ENCODE measurements at regions of chr3 and their contacts with region 1.

Region 1: GRCh38 chr3:138834359-138835212 is at the start of gene PIK3CB:
- DNase-seq: peak; percentile 78 to 94 (median 88)
- ATAC-seq: peak; percentile 86
- H3K4me3 ChIP-seq: peak within 1 kb of the TSS; percentile 92
- H3K4me3 Mint-ChIP-seq: peak within 1 kb of the TSS; percentile 94
- H3K27ac ChIP-seq: peak within 1 kb of the TSS; percentile 68 to 81
- H3K27ac Mint-ChIP-seq: peak within 1 kb of the TSS; percentile 96
- H3K4me1 ChIP-seq: peaks cover 36% of the 10 kb centered on the region
- H3K4me1 Mint-ChIP-seq: peaks cover 31% of the 10 kb centered on the region
- H3K27me3 ChIP-seq: no peaks in the 10 kb centered on the region
- H3K27me3 Mint-ChIP-seq: no peaks in the 10 kb centered on the region
- CTCF ChIP-seq: peak; percentile 39
- total RNA-seq, gene PIK3CB: 23.0 to 26.4 TPM

Region 2: DNA sequence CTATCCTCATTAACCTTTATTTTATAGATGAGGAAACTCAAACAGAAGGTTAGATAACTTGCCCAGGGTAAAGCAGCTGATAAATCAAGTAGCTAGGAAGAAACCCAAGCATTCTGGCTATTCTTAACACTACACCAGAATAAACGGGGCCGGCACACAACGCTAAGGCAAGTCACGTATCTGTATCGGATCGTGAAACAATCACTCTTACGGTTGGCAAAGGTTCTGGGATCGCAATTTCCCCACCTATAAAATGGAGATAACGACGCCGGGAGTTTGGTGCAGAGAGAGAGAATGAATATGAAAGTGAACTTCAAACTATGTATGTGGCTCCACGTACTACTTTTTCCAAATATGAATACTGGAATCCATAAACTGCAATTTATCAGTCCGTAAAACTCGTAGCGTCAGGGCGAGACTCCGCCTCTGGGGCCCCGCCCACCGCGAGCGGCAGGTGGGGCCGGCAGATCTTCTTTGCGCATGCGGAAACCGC is 647.7 kb before region 1 on chr3:
- CTCF ChIA-PET with region 1: no interaction called
- POLR2A ChIA-PET with region 1: no interaction called
- intact Hi-C with region 1: loop called in 1 of 2 experiments (anchors 10 kb)
- DNase-seq: peak; percentile 78 to 95 (median 88)
- ATAC-seq: peak; percentile 92
- H3K4me3 ChIP-seq: peak overlapping the region; percentile 91
- H3K4me3 Mint-ChIP-seq: peak overlapping the region; percentile 97
- H3K27ac ChIP-seq: peak overlapping the region; percentile 72 to 83
- H3K27ac Mint-ChIP-seq: peak overlapping the region; percentile 92
- H3K4me1 ChIP-seq: peaks cover 16% of the 10 kb centered on the region
- H3K4me1 Mint-ChIP-seq: peaks cover 46% of the 10 kb centered on the region
- H3K27me3 ChIP-seq: peaks cover 0 to 8% of the 10 kb centered on the region in 2 experiments
- H3K27me3 Mint-ChIP-seq: peaks cover 4% of the 10 kb centered on the region
- CTCF ChIP-seq: no peak

Region 3: DNA sequence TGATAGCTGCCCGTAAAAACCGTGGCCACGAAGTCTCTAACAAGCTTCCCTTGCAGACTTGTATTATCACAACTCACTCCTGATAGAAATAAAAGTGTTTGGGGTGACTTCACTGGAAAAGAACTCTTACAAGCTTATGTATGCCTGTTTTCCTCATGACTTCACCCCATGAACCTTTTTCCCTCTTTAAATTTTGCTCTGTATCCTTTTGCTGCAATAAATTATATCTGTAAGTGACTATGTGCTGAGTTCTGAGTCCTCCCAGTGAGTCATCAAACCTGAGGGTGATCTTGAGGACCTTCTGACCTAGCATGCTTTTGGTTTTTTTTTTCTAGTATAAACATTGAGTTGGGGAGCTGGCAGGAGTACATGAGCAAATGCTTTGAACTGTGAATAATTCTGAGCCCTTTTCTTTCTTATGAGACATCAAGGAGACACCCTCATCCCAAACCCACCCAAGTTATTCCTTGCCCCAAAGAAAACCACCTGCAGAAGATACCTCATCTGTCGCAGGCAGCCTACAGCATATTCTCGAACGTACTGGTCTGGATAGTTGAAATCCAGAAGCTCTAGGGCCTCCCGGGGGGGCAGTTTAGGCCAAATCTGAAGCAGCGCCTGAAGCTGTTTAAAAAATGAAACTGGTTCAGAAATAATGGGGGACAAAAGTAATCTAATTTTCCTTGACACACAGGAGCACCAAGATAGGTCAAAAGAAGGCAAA is 140.1 kb before region 1 on chr3:
- CTCF ChIA-PET with region 1: no interaction called
- POLR2A ChIA-PET with region 1: no interaction called
- intact Hi-C with region 1: loop called in 1 of 2 experiments (anchors 5 kb)
- DNase-seq: no peak
- ATAC-seq: no peak
- H3K4me3 ChIP-seq: no peak overlapping the region
- H3K4me3 Mint-ChIP-seq: no peak overlapping the region
- H3K27ac ChIP-seq: no peak overlapping the region
- H3K27ac Mint-ChIP-seq: no peak overlapping the region
- H3K4me1 ChIP-seq: no peaks in the 10 kb centered on the region
- H3K4me1 Mint-ChIP-seq: no peaks in the 10 kb centered on the region
- H3K27me3 ChIP-seq: no peaks in the 10 kb centered on the region
- H3K27me3 Mint-ChIP-seq: no peaks in the 10 kb centered on the region
- CTCF ChIP-seq: no peak

Region 4: GRCh38 chr3:138781012-138781470 is 53.5 kb before region 1 on chr3:
- CTCF ChIA-PET with region 1: no interaction called
- POLR2A ChIA-PET with region 1: interaction called, 4 read pairs
- intact Hi-C with region 1: loop called (anchors 2 to 5 kb)
- DNase-seq: peak; percentile 32 to 89 (median 48)
- ATAC-seq: peak; percentile 98
- H3K4me3 ChIP-seq: peak overlapping the region; percentile 24
- H3K4me3 Mint-ChIP-seq: peak overlapping the region; percentile 39
- H3K27ac ChIP-seq: peak overlapping the region; percentile 73 to 74
- H3K27ac Mint-ChIP-seq: peak overlapping the region; percentile 87
- H3K4me1 ChIP-seq: peaks cover 15% of the 10 kb centered on the region
- H3K4me1 Mint-ChIP-seq: peaks cover 46% of the 10 kb centered on the region
- H3K27me3 ChIP-seq: no peaks in the 10 kb centered on the region
- H3K27me3 Mint-ChIP-seq: no peaks in the 10 kb centered on the region
- CTCF ChIP-seq: no peak

Region 5: DNA sequence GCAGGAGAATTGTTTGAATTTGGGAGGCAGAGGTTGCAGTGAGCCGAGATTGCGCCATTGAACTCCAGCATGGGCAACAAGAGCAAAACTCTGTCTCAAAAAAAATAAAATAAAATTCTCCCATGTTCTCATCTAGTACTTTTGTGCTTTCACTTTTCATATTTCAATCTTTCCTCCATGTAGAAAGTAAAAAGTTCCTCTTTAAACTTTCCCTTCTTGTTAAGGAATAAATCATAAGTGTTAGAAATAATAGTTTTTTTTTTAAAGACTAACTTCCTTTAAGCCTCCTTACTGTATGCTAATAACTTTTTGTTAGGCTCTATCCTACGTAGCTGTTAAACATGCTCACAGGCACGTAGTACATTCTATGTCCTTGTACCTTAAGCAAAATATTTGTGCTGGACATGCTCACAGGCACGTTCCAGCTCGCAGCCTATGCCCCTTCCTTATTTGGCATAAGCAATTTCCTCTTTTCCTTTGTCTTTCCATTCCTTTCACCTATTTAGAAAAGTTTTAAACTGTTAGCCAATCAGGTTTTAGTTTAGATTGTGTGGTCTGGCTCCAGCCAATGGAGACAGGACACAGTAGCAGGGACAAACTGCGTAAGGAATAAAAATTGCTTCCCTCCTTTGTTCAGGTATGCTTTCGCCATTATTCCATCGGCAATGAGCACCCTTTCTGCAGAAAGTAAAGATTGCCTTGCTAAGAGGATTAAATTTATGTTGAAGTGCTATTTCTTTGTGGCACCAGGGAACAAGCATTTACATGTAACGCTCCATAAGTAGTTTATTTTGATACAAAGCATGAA is 39.1 kb after region 1 on chr3:
- CTCF ChIA-PET with region 1: no interaction called
- POLR2A ChIA-PET with region 1: no interaction called
- intact Hi-C with region 1: no loop called
- DNase-seq: no peak
- ATAC-seq: no peak
- H3K4me3 ChIP-seq: no peak overlapping the region
- H3K4me3 Mint-ChIP-seq: no peak overlapping the region
- H3K27ac ChIP-seq: no peak overlapping the region
- H3K27ac Mint-ChIP-seq: no peak overlapping the region
- H3K4me1 ChIP-seq: no peaks in the 10 kb centered on the region
- H3K4me1 Mint-ChIP-seq: no peaks in the 10 kb centered on the region
- H3K27me3 ChIP-seq: no peaks in the 10 kb centered on the region
- H3K27me3 Mint-ChIP-seq: no peaks in the 10 kb centered on the region
- CTCF ChIP-seq: no peak

Region 6: GRCh38 chr3:138915503-138916498 is 81.2 kb after region 1 on chr3:
- CTCF ChIA-PET with region 1: interaction called, 11 read pairs
- POLR2A ChIA-PET with region 1: interaction called, 11 read pairs
- intact Hi-C with region 1: loop called in 1 of 2 experiments (anchors 2 kb)
- DNase-seq: peak; percentile 68 to 90 (median 75)
- ATAC-seq: peak; percentile 87
- H3K4me3 ChIP-seq: peak overlapping the region; percentile 82
- H3K4me3 Mint-ChIP-seq: peak overlapping the region; percentile 87
- H3K27ac ChIP-seq: no peak overlapping the region
- H3K27ac Mint-ChIP-seq: peak overlapping the region; percentile 47
- H3K4me1 ChIP-seq: peaks cover 18% of the 10 kb centered on the region
- H3K4me1 Mint-ChIP-seq: no peaks in the 10 kb centered on the region
- H3K27me3 ChIP-seq: peaks cover 0 to 4% of the 10 kb centered on the region in 2 experiments
- H3K27me3 Mint-ChIP-seq: peaks cover 5% of the 10 kb centered on the region
- CTCF ChIP-seq: peak; percentile 85